Mammary epithelial cell (primary cell): ENCODE measurements at regions of chr17 and their contacts with region 1.

Region 1: GRCh38 chr17:45123930-45124796 is 8.2 kb downstream of the PLCD3 start:
- DNase-seq: peak; percentile 79
- H3K4me3 ChIP-seq: no peak overlapping the region
- H3K27ac ChIP-seq: peak overlapping the region; percentile 64
- H3K4me1 ChIP-seq: peaks cover 51% of the 10 kb centered on the region
- H3K27me3 ChIP-seq: no peaks in the 10 kb centered on the region
- CTCF ChIP-seq: no peak

Region 2: DNA sequence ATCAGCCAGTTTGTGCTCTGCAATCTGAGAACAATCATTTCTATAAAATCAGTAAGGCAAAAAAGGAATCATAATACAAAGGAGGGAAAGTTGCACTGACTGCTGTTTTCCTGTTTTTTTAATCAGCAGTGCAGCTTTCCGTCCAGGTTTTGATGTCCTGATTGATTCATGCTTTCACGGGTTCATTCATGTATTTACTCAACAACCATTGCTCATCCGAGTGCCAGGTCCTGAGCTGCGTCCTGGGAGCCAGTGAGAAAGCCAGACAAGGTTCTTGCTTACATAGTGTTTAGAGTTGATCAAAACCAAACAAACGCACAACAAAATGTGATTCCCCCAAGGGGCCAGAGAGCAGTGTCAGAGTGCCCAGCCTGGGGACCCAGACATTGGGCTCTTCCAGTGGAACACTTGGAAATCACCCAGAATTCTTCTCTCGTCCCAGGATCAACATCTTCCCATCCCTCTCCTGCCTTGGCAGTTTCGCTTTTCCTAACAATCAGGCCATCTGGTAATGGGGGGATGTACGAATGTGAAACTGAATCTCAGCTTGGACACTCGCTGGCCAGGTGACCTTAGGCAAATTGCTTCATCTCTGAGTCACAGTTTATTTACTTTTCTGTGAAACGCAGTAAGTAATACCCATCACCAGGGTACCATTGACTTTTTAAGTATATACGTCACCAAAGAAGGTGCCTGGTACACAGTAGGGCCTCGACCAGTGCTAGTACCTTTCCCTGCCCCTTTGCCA is 142.8 kb before region 1 on chr17:
- CTCF ChIA-PET with region 1: no interaction called
- dilution Hi-C with region 1: loop called (anchors 5 kb)
- in situ Hi-C with region 1: no loop called
- intact Hi-C with region 1: no loop called
- DNase-seq: peak; percentile 53
- H3K4me3 ChIP-seq: no peak overlapping the region
- H3K27ac ChIP-seq: no peak overlapping the region
- H3K4me1 ChIP-seq: no peaks in the 10 kb centered on the region
- H3K27me3 ChIP-seq: no peaks in the 10 kb centered on the region
- CTCF ChIP-seq: no peak

Region 3: DNA sequence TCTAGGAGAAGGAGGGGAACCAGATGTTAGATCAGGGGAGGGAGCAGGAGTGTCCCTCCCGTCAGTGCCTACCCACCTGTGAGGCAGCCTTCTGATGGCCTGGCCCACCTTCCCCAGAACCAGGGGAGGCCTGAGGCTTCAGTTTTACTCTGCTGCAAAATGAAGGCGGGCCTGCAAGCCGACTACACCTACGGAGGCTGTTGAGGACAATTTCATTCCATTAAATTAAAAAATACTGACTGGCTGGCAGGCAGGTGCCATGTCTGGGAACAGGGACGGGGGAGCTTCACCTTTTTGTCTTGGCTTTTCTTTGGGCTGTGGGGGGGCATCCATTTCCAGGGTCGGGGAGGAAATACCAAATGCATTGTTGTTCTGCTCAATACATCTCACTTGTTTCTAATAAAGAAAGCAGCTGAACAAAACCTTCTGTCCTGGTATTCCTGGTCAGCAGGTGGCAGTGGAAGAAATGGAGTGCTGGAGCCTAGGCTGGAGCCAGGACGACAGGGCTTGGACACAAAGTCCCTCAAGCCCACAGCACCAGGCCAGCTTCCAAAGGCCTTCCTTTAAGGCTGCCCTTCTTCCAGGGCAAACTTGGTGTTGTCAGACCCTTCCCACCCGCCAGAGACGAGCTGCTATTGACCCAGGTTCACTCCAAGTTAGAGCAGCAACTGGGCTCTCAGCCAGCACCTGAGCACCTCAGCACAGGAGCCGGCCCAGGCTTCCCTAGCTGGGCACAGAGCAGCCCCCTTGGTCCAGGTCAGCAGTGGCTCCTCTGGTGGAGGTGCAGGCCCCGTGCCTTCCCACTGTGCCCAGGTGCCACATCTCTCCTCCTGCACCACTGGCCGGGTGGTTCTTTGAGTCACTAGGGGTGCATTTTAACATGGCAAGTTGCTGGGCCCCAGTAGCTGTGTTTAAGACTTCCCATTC is 15.3 kb before region 1 on chr17:
- CTCF ChIA-PET with region 1: no interaction called
- dilution Hi-C with region 1: no loop called
- in situ Hi-C with region 1: no loop called
- intact Hi-C with region 1: loop called (anchors 1 kb)
- DNase-seq: no peak
- H3K4me3 ChIP-seq: no peak overlapping the region
- H3K27ac ChIP-seq: no peak overlapping the region
- H3K4me1 ChIP-seq: peaks cover 2% of the 10 kb centered on the region
- H3K27me3 ChIP-seq: no peaks in the 10 kb centered on the region
- CTCF ChIP-seq: peak in 1 of 2 donors; percentile 28

Region 4: GRCh38 chr17:45172454-45173286 is 48.5 kb after region 1 on chr17:
- CTCF ChIA-PET with region 1: no interaction called
- dilution Hi-C with region 1: no loop called
- in situ Hi-C with region 1: no loop called
- intact Hi-C with region 1: no loop called
- DNase-seq: peak; percentile 96
- H3K4me3 ChIP-seq: peak overlapping the region; percentile 40 to 58 (median 49)
- H3K27ac ChIP-seq: peak overlapping the region; percentile 99
- H3K4me1 ChIP-seq: peaks cover 55% of the 10 kb centered on the region
- H3K27me3 ChIP-seq: no peaks in the 10 kb centered on the region
- CTCF ChIP-seq: peak; percentile 13 to 46

Region 5: DNA sequence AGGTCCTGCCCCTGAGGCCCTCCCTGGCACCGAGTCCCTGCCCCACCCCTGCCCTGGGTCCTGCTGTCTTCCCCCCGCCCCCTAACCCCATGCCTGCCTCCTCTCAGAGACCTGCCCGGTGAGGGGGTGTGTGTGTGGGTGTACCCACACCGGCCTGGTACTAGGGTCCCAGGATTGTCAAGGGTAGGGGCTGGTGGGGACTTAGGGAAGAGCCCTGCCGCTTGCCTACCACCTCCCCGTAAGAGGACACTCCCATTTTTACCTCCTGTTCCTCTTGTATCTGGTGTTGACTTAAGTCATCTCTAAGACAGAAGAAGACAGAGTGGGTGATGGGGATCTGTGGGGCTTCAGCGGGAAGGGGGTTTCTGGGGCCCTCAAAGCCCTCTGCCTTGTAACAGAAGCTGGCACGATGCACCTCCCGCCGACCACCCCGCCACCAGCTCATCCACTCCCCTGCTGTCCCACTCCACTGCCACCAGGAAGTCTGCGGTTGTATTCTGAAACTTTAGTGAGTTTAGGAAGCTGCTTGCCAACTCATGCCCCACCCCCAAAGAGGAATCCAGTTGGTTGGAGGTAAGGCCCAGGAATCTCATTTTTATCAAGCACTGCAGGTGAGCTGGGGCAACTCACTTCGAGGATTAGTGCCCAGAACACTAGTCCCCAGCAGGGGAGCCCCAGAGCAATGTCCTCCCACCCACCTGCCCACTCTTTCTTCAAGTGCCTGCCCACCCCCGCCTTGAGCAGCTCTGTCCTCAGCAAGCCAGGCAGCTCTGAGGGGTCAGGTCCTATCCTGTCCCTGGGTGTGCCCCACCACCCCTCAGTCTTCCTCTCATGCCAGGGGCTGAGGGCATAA is 132.2 kb after region 1 on chr17:
- CTCF ChIA-PET with region 1: no interaction called
- dilution Hi-C with region 1: no loop called
- in situ Hi-C with region 1: no loop called
- intact Hi-C with region 1: no loop called
- DNase-seq: no peak
- H3K4me3 ChIP-seq: no peak overlapping the region
- H3K27ac ChIP-seq: no peak overlapping the region
- H3K4me1 ChIP-seq: no peaks in the 10 kb centered on the region
- H3K27me3 ChIP-seq: no peaks in the 10 kb centered on the region
- CTCF ChIP-seq: peak in 1 of 2 donors; percentile 6

Region 6: GRCh38 chr17:45284176-45285140 is 160.3 kb after region 1 on chr17:
- CTCF ChIA-PET with region 1: no interaction called
- dilution Hi-C with region 1: loop called (anchors 10 kb)
- in situ Hi-C with region 1: no loop called
- intact Hi-C with region 1: no loop called
- DNase-seq: peak; percentile 93
- H3K4me3 ChIP-seq: no peak overlapping the region
- H3K27ac ChIP-seq: peak overlapping the region; percentile 55
- H3K4me1 ChIP-seq: peaks cover 16% of the 10 kb centered on the region
- H3K27me3 ChIP-seq: no peaks in the 10 kb centered on the region
- CTCF ChIP-seq: peak; percentile 14 to 47